Caco-2 (cell line): ENCODE measurements at regions of chr2 and their contacts with region 1.

Region 1: GRCh38 chr2:43595603-43596412 is at the start of gene THADA:
- DNase-seq: peak; percentile 99 to 100
- H3K4me3 ChIP-seq: peak within 1 kb of the TSS; percentile 70
- H3K4me3 Mint-ChIP-seq: peak within 1 kb of the TSS; percentile 95
- H3K27ac Mint-ChIP-seq: peak within 1 kb of the TSS; percentile 97
- H3K4me1 ChIP-seq: peaks cover 6% of the 10 kb centered on the region; the same call in 1 of the 2 replicates
- H3K4me1 Mint-ChIP-seq: peaks cover 37% of the 10 kb centered on the region
- H3K27me3 ChIP-seq: no peaks in the 10 kb centered on the region
- H3K27me3 Mint-ChIP-seq: no peaks in the 10 kb centered on the region
- CTCF ChIP-seq: no peak
- total RNA-seq, gene THADA: 33.8 and 35.3 TPM in 2 replicates

Region 2: DNA sequence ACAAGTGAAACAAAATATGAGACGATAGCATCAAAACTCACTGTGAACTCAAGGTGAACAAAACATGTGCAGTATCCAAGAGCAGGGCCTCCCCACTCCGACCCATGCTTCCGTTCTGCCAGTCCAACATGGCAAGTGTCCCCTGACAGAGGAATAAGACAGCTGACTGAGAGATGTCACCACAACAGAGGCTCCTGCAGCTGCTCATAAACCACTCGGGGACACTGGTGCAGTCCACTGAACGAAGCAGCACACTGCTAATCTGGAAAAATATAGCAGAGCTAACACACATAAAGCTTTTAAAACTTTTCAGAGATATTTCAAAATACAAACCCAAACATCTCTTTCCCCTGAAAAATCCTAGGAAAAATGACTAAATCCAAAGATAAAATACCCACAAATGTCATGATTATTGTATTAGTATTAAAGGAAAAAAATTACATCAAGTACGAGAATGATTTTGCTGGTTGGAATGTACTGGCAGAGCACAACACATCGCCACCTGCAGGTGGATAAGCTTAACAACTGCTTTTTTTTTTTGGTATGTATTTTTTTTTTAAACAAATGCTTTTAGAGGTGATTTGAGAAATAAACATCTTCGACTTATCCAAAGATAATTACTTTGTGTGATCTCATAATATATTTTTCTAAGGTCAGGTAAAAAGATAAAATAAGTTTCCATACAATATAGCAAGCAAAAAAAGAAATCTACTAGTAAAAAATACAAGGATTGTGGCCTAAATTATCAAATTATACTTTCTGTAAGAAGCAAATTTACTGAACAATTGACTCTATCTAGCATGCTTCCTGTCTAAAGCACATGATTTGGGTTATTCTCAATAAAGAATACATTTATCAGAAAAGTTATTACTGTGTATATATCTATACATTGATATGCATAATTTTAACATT is 18.6 kb before region 1 on chr2:
- CTCF ChIA-PET with region 1: interaction called, 6 read pairs
- POLR2A ChIA-PET with region 1: interaction called, 16 read pairs
- intact Hi-C with region 1: no loop called
- DNase-seq: peak in 1 of 2 experiments; percentile 35
- H3K4me3 ChIP-seq: no peak overlapping the region
- H3K4me3 Mint-ChIP-seq: no peak overlapping the region
- H3K27ac Mint-ChIP-seq: no peak overlapping the region
- H3K4me1 ChIP-seq: no peaks in the 10 kb centered on the region
- H3K4me1 Mint-ChIP-seq: no peaks in the 10 kb centered on the region
- H3K27me3 ChIP-seq: no peaks in the 10 kb centered on the region
- H3K27me3 Mint-ChIP-seq: no peaks in the 10 kb centered on the region
- CTCF ChIP-seq: peak; percentile 78 to 82

Region 3: GRCh38 chr2:43611987-43612894 is 16.4 kb after region 1 on chr2:
- CTCF ChIA-PET with region 1: interaction called, 3 read pairs
- POLR2A ChIA-PET with region 1: interaction called, 3 read pairs
- intact Hi-C with region 1: loop called (anchors 1 kb)
- DNase-seq: peak; percentile 74 to 84
- H3K4me3 ChIP-seq: no peak overlapping the region
- H3K4me3 Mint-ChIP-seq: no peak overlapping the region
- H3K27ac Mint-ChIP-seq: no peak overlapping the region
- H3K4me1 ChIP-seq: no peaks in the 10 kb centered on the region
- H3K4me1 Mint-ChIP-seq: peaks cover 18% of the 10 kb centered on the region
- H3K27me3 ChIP-seq: no peaks in the 10 kb centered on the region; the same call in 1 of the 2 replicates
- H3K27me3 Mint-ChIP-seq: peaks cover 2% of the 10 kb centered on the region
- CTCF ChIP-seq: peak; percentile 87 to 88

Region 4: GRCh38 chr2:43773876-43774613 is 178.2 kb after region 1 on chr2 and contains the start of gene DYNC2LI1:
- CTCF ChIA-PET with region 1: no interaction called
- POLR2A ChIA-PET with region 1: interaction called, 5 read pairs
- intact Hi-C with region 1: loop called (anchors 1 kb)
- DNase-seq: peak; percentile 93 to 94
- H3K4me3 ChIP-seq: peak within 1 kb of the TSS; percentile 71
- H3K4me3 Mint-ChIP-seq: peak within 1 kb of the TSS; percentile 84
- H3K27ac Mint-ChIP-seq: peak within 1 kb of the TSS; percentile 95
- H3K4me1 ChIP-seq: no peaks in the 10 kb centered on the region
- H3K4me1 Mint-ChIP-seq: peaks cover 4% of the 10 kb centered on the region
- H3K27me3 ChIP-seq: no peaks in the 10 kb centered on the region
- H3K27me3 Mint-ChIP-seq: no peaks in the 10 kb centered on the region
- CTCF ChIP-seq: no peak
- total RNA-seq, gene DYNC2LI1: 6.4 and 8.3 TPM in 2 replicates